Activated CD4-positive, alpha-beta memory T cell treated with anti-CD3 and anti-CD28 coated beads for 36 hours (primary cell): ENCODE measurements at regions of chr5 and their contacts with region 1.

Region 1: GRCh38 chr5:38265546-38266179 is 7.3 kb downstream of the EGFLAM start:
- DNase-seq: peak; percentile 48
- H3K4me3 Mint-ChIP-seq: no peak overlapping the region
- H3K27ac Mint-ChIP-seq: no peak overlapping the region
- H3K4me1 Mint-ChIP-seq: no peaks in the 10 kb centered on the region
- H3K27me3 Mint-ChIP-seq: peaks cover 33% of the 10 kb centered on the region

Region 2: DNA sequence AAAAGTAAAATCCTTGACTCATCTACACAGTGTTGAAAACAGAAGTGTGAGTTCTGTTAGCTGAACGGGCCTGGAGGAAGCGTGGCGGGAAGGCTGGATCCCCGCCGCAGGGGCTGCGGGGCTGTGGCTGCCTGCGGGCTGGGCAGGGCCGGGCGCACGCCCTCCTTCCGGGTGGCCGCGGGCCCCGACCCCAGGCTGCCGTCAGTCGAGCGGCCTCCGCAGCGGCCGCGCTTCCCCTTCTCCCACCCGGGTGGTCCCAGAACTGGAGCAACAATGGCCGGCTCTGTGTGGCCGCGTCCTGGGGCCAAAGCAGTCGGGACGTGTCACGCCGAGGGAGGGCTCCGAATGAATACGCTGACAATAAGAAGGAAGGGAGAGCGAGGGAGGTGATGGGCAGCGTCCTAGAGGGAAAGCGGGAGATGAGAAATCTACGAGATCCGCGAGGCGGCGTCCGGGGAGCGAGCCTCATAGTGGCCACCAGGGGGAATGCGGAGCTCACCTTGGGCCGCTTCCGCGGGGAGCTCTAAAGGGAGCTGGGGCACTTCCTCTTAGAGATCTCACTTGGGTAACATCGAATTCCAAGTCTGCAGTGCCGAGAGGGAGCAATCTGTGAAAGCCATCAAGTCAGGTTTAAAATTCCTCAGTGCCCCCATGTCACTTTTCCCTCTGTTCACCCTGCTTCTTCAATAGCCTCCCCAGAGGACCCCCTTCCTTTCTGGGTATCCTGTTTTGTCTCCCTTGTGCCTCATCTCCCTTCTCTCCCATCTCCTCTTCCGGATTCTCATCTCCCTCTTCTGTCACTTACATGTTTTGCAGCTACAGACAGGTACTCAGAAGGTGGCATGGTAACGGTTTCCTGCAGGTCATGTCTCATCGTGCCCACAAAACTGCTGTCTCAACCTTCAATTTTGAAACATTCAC is 1575.4 kb before region 1 on chr5:
- CTCF ChIA-PET with region 1: no interaction called
- POLR2A ChIA-PET with region 1: no interaction called
- intact Hi-C with region 1: no loop called
- DNase-seq: peak; percentile 77
- H3K4me3 Mint-ChIP-seq: peak overlapping the region; percentile 67
- H3K27ac Mint-ChIP-seq: no peak overlapping the region
- H3K4me1 Mint-ChIP-seq: peaks cover 13% of the 10 kb centered on the region
- H3K27me3 Mint-ChIP-seq: peaks cover 20% of the 10 kb centered on the region

Region 3: GRCh38 chr5:38250763-38251448 is 14.8 kb before region 1 on chr5:
- CTCF ChIA-PET with region 1: interaction called, 14 read pairs
- POLR2A ChIA-PET with region 1: interaction called, 3 read pairs
- intact Hi-C with region 1: no loop called
- DNase-seq: no peak
- H3K4me3 Mint-ChIP-seq: no peak overlapping the region
- H3K27ac Mint-ChIP-seq: no peak overlapping the region
- H3K4me1 Mint-ChIP-seq: no peaks in the 10 kb centered on the region
- H3K27me3 Mint-ChIP-seq: peaks cover 5% of the 10 kb centered on the region

Region 4: DNA sequence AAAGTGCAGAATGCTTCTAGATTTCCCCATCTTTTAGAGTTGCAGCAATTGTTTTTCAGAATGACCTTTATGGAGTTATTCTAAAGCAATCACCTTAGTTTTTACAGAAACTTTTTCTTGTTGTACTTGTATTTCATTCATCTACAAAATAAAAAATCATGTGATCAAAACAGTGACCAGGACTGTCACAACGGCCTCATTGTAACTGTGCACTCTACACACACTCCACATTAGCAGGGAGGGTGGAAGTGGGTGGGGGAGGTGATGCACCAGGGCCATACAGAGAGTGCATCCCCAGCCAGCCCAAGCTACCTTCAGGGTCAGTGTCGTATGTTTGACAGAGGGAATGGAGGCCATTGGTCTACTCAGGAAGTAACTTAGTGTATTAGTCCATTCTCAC is 19.6 kb after region 1 on chr5:
- CTCF ChIA-PET with region 1: interaction called, 15 read pairs
- POLR2A ChIA-PET with region 1: no interaction called
- intact Hi-C with region 1: no loop called
- DNase-seq: no peak
- H3K4me3 Mint-ChIP-seq: no peak overlapping the region
- H3K27ac Mint-ChIP-seq: no peak overlapping the region
- H3K4me1 Mint-ChIP-seq: no peaks in the 10 kb centered on the region
- H3K27me3 Mint-ChIP-seq: peaks cover 2% of the 10 kb centered on the region